ENCODE measurements at regions of chr3 and their contacts with region 1.

Region 1: DNA sequence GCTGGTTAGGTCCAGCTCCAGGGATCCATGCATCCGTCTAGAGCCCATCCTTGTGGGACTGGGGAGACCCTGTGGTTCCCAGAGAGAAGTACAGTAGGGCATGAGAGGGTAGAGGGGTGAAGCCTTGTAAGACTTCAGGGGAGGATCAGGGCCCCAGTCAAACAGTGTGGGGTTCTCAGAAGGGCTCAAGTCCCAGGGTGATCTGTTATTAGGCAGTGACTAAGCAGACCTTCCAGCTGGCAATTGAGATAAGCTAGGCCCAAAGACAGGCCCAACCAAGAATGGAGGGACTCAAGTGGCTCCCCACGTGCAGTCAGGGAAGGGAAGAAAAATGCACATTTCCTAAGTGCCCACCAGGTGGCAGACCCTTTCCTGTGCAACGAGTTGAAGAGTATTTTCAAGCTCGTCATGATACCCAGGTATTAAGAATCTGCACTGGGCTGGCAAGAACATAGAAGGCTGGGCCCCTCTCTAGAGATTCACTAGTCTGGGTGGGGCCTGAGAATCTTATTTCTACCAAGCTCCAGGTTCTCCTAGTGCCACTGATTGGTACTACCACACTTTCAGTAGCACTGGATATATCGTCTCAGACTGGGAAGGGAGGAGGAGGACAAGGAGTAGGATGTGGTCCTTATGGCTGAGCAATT is 240.8 kb downstream of the NR1D2 start:
- DNase-seq: peak; percentile 59
- H3K4me3 ChIP-seq: no peak overlapping the region
- H3K27ac ChIP-seq: no peak overlapping the region
- H3K4me1 ChIP-seq: no peaks in the 10 kb centered on the region
- CTCF ChIP-seq: peak; percentile 79

Region 2: GRCh38 chr3:24088782-24089181 is 97.1 kb before region 1 on chr3:
- CTCF ChIA-PET with region 1: no interaction called
- POLR2A ChIA-PET with region 1: no interaction called
- intact Hi-C with region 1: loop called (anchors 10 kb)
- DNase-seq: peak; percentile 31
- H3K4me3 ChIP-seq: no peak overlapping the region
- H3K27ac ChIP-seq: no peak overlapping the region
- H3K4me1 ChIP-seq: no peaks in the 10 kb centered on the region
- CTCF ChIP-seq: peak; percentile 76

Region 3: GRCh38 chr3:24154013-24154695 is 31.7 kb before region 1 on chr3:
- CTCF ChIA-PET with region 1: no interaction called
- POLR2A ChIA-PET with region 1: interaction called, 3 read pairs
- intact Hi-C with region 1: loop called (anchors 1 kb)
- DNase-seq: no peak
- H3K4me3 ChIP-seq: no peak overlapping the region
- H3K27ac ChIP-seq: no peak overlapping the region
- H3K4me1 ChIP-seq: no peaks in the 10 kb centered on the region
- CTCF ChIP-seq: no peak

Region 4: GRCh38 chr3:24237971-24238767 is 52.3 kb after region 1 on chr3:
- CTCF ChIA-PET with region 1: no interaction called
- POLR2A ChIA-PET with region 1: no interaction called
- intact Hi-C with region 1: loop called (anchors 5 kb)
- DNase-seq: peak; percentile 75
- H3K4me3 ChIP-seq: no peak overlapping the region
- H3K27ac ChIP-seq: no peak overlapping the region
- H3K4me1 ChIP-seq: no peaks in the 10 kb centered on the region
- CTCF ChIP-seq: peak; percentile 84

Measured in OCI-LY7 (cell line).